Esophagus muscularis mucosa (tissue), 4 donors: ENCODE measurements at regions of chr4 and their contacts with region 1.

Region 1: GRCh38 chr4:165464813-165465381 is 86.1 kb downstream of the CPE start:
- DNase-seq: no peak
- H3K4me3 ChIP-seq: no peak overlapping the region
- H3K27ac ChIP-seq: no peak overlapping the region
- H3K4me1 ChIP-seq: peaks cover 0 to 24% (median 17%) of the 10 kb centered on the region in 4 donors
- H3K27me3 ChIP-seq: no peaks in the 10 kb centered on the region
- CTCF ChIP-seq: peak; percentile 76 to 78 (median 76)
- EP300 ChIP-seq: no peak
- POLR2A ChIP-seq: no peak

Region 2: GRCh38 chr4:165131247-165131832 is 333.6 kb before region 1 on chr4:
- intact Hi-C with region 1: loop called (anchors 2 kb)
- DNase-seq: peak; percentile 92
- H3K4me3 ChIP-seq: no peak overlapping the region
- H3K27ac ChIP-seq: no peak overlapping the region
- H3K4me1 ChIP-seq: peaks cover 0 to 7% (median 0%) of the 10 kb centered on the region in 4 donors
- H3K27me3 ChIP-seq: peaks cover 0 to 4% (median 0%) of the 10 kb centered on the region in 4 donors
- CTCF ChIP-seq: peak; percentile 83 to 93 (median 85)
- EP300 ChIP-seq: no peak
- POLR2A ChIP-seq: no peak

Region 3: GRCh38 chr4:165207431-165208220 is 257.3 kb before region 1 on chr4 and contains the start of gene KLHL2:
- intact Hi-C with region 1: loop called (anchors 10 kb)
- DNase-seq: no peak
- H3K4me3 ChIP-seq: peak within 1 kb of the TSS; percentile 81 to 98 (median 96)
- H3K27ac ChIP-seq: peak within 1 kb of the TSS; percentile 85 to 94 (median 91)
- H3K4me1 ChIP-seq: peaks cover 12 to 32% (median 27%) of the 10 kb centered on the region in 4 donors
- H3K27me3 ChIP-seq: no peaks in the 10 kb centered on the region
- CTCF ChIP-seq: no peak
- EP300 ChIP-seq: no peak
- POLR2A ChIP-seq: no peak
- total RNA-seq, gene KLHL2: 23.5 to 35.3 (median 27.2) TPM

Region 4: GRCh38 chr4:165351359-165352130 is 113.4 kb before region 1 on chr4:
- intact Hi-C with region 1: loop called (anchors 2 kb)
- DNase-seq: no peak
- H3K4me3 ChIP-seq: no peak overlapping the region
- H3K27ac ChIP-seq: no peak overlapping the region
- H3K4me1 ChIP-seq: no peaks in the 10 kb centered on the region
- H3K27me3 ChIP-seq: no peaks in the 10 kb centered on the region
- CTCF ChIP-seq: no peak
- EP300 ChIP-seq: no peak
- POLR2A ChIP-seq: no peak

Region 5: DNA sequence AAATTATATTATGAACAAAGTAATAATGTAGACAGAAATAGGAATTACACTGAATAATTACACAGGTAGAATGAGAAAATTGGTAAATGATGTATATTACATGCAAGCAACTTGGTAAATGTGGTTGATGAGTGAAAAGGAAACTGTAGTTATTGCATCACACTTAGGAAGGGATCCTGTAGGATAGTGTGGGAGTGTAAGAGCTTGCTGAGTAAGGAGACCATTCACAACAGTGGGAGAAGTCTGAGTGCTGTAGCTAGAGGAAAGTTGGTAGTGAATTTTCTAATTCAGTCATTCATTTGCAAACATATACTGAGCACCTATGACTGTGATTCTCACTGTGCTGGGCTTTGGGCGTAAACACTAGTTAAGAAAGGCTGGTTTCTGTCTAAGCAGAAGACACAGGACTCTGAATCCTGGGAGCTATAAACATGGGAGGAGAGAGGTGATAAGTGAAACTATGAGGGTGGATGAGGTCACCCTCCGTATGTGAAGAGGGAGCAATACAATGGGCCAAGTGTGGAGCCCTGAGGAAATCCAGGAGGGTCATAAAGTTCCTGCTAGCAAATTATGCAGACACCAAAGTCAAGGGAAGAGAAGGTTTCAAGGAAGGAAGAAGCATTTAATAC is 100.3 kb before region 1 on chr4:
- intact Hi-C with region 1: no loop called
- DNase-seq: no peak
- H3K4me3 ChIP-seq: no peak overlapping the region
- H3K27ac ChIP-seq: no peak overlapping the region
- H3K4me1 ChIP-seq: no peaks in the 10 kb centered on the region
- H3K27me3 ChIP-seq: no peaks in the 10 kb centered on the region
- CTCF ChIP-seq: no peak
- EP300 ChIP-seq: no peak
- POLR2A ChIP-seq: no peak

Region 6: DNA sequence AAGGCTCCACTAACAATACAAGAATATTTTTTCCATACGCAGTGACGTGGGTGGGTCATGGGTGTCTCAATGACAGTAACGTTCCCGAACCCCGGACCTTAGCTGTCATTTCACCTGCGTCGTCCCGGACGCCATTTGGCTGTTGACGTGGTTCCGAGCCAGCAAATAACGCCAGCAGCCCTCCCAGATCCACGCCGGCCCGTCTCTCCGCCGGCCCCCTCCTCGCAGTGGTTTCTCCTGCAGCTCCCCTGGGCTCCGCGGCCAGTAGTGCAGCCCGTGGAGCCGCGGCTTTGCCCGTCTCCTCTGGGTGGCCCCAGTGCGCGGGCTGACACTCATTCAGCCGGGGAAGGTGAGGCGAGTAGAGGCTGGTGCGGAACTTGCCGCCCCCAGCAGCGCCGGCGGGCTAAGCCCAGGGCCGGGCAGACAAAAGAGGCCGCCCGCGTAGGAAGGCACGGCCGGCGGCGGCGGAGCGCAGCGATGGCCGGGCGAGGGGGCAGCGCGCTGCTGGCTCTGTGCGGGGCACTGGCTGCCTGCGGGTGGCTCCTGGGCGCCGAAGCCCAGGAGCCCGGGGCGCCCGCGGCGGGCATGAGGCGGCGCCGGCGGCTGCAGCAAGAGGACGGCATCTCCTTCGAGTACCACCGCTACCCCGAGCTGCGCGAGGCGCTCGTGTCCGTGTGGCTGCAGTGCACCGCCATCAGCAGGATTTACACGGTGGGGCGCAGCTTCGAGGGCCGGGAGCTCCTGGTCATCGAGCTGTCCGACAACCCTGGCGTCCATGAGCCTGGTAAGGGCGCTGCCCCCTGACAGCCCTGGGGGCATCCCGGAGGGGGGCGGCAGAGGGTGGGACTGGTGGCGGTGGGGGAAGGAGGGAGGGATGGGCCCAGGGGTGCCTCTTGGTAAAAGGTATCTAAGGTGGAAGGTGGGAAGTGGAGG is 85.9 kb before region 1 on chr4 and contains the start of gene CPE:
- intact Hi-C with region 1: loop called (anchors 5 kb)
- DNase-seq: no peak
- H3K4me3 ChIP-seq: peak within 1 kb of the TSS; percentile 65 to 79 (median 72)
- H3K27ac ChIP-seq: peak within 1 kb of the TSS; percentile 76 to 89 (median 81)
- H3K4me1 ChIP-seq: peaks cover 0 to 34% (median 16%) of the 10 kb centered on the region in 4 donors
- H3K27me3 ChIP-seq: peaks cover 0 to 8% (median 0%) of the 10 kb centered on the region in 4 donors
- CTCF ChIP-seq: peak; percentile 17 to 75 (median 51)
- EP300 ChIP-seq: no peak
- POLR2A ChIP-seq: peak; percentile 15
- total RNA-seq, gene CPE: 104 to 116 (median 108) TPM